ENCODE measurements at regions of chr1 and their contacts with region 1.

Region 1: DNA sequence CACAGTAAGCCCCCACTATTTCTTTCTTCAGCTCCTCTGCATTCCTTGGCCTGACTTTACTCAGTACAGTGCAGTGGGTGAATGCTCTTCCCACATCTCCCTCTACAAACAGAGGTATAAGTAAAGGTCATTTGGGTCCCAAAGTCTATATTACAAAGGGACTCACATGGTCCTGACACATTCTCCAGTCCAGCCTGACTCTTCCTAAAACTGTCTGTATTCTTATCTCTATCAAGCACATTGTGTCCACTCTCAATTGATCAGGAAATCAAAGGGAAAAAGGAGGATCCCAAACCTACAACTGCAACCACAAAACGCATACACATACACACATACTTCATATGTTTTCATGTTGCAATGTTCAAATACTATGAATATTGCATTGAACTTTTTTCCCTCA is 49.4 kb downstream of the FRRS1 start:
- DNase-seq: no peak
- H3K4me3 ChIP-seq: no peak overlapping the region
- H3K27ac ChIP-seq: no peak overlapping the region
- H3K4me1 ChIP-seq: no peaks in the 10 kb centered on the region
- H3K27me3 ChIP-seq: no peaks in the 10 kb centered on the region
- CTCF ChIP-seq: no peak
- POLR2A ChIP-seq: no peak

Region 2: GRCh38 chr1:98523256-98523655 is 1193.7 kb before region 1 on chr1:
- intact Hi-C with region 1: loop called (anchors 10 kb)
- DNase-seq: no peak
- H3K4me3 ChIP-seq: no peak overlapping the region
- H3K27ac ChIP-seq: no peak overlapping the region
- H3K4me1 ChIP-seq: no peaks in the 10 kb centered on the region
- H3K27me3 ChIP-seq: no peaks in the 10 kb centered on the region
- CTCF ChIP-seq: no peak
- POLR2A ChIP-seq: no peak

Region 3: DNA sequence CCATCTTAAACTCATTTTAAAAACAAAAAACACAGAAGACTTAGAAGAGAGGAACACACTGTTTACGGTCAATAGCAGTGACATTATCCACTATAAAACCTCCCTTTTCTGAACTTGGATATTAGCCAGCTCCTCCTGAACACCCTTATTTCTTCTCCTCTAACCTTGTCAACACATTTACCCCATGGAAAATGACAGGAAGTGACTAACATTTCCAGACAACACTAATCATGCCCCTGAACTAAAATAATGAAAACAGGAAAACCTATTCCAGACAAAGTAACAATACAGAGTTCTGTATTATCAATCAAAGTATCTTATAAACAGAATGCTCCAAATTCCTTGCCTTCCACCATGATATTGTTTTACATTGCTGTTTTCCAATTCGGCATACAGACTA is 25.8 kb before region 1 on chr1:
- intact Hi-C with region 1: no loop called
- DNase-seq: no peak
- H3K4me3 ChIP-seq: no peak overlapping the region
- H3K27ac ChIP-seq: peak overlapping the region in 1 of 2 donors; percentile 32
- H3K4me1 ChIP-seq: no peaks in the 10 kb centered on the region
- H3K27me3 ChIP-seq: no peaks in the 10 kb centered on the region
- CTCF ChIP-seq: no peak
- POLR2A ChIP-seq: no peak

Measured in breast epithelium (tissue), 4 donors.